Mammary epithelial cell (primary cell): ENCODE measurements at regions of chr2 and their contacts with region 1.

Region 1: DNA sequence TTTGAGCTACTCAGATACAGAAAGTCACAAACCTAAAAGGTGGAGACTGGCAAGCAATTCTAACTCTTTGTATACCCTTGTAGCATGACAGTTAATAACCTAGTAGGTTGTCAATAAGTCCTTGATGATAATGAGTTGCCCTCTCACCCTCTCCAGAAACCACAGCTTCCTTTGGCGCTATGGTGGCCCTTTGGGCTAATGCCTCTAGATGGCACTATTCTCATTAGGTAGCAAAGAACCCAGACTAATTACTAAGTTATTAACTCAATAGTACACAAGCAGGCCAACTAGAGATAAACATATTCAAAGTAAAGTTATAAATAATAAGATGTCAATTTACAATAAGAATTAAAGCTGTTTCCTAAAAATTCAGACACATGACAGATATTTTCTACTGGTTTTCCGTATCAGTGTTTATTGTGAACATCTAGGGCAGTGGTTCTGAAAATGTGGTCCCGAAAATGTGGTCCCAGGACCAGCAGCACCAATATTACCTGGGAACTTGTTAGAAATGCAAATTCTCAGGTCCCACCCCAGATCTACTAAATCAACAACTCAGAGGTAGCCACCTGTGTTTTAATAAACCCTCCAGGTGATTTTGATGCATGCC is 41.1 kb downstream of the LDAH start:
- DNase-seq: peak; percentile 28
- H3K4me3 ChIP-seq: no peak overlapping the region
- H3K27ac ChIP-seq: no peak overlapping the region
- H3K4me1 ChIP-seq: no peaks in the 10 kb centered on the region
- H3K27me3 ChIP-seq: no peaks in the 10 kb centered on the region
- CTCF ChIP-seq: peak; percentile 86 to 88

Region 2: GRCh38 chr2:20916604-20917286 is 135.0 kb after region 1 on chr2:
- CTCF ChIA-PET with region 1: no interaction called
- dilution Hi-C with region 1: no loop called
- in situ Hi-C with region 1: no loop called
- intact Hi-C with region 1: loop called (anchors 2 kb)
- DNase-seq: peak; percentile 13
- H3K4me3 ChIP-seq: no peak overlapping the region
- H3K27ac ChIP-seq: no peak overlapping the region
- H3K4me1 ChIP-seq: peaks cover 29% of the 10 kb centered on the region
- H3K27me3 ChIP-seq: no peaks in the 10 kb centered on the region
- CTCF ChIP-seq: peak; percentile 9 to 37

Region 3: DNA sequence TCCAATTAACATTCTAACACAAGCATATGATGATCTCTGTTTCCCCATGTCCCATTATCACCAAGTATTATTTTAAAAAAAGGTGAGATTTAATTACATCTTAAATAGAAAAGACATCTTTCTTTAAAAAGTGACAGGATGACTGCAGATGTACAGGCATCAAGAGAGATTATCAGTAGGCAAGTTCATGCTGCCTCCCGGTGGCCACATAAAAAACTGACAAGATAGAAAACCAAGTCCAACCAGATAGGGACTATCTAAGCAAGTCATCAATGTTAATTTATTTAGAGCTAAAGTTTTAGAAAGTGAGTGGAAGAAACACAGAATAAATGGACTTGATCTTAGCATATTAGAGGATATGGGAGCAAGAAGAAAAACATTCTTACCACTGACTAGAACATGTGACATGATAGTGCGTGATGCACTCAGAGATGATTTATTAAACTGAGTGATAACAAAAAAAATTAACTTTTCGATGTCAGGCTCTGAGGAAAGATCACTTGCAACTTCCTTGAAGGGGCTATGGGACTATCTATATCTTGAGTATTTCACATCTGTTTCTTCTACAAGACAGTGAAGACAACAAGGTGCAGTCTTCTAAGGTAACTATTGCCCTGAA is 336.6 kb after region 1 on chr2:
- CTCF ChIA-PET with region 1: no interaction called
- dilution Hi-C with region 1: no loop called
- in situ Hi-C with region 1: no loop called
- intact Hi-C with region 1: loop called (anchors 1 kb)
- DNase-seq: peak; percentile 11
- H3K4me3 ChIP-seq: no peak overlapping the region
- H3K27ac ChIP-seq: no peak overlapping the region
- H3K4me1 ChIP-seq: no peaks in the 10 kb centered on the region
- H3K27me3 ChIP-seq: no peaks in the 10 kb centered on the region
- CTCF ChIP-seq: peak; percentile 35 to 62

Region 4: DNA sequence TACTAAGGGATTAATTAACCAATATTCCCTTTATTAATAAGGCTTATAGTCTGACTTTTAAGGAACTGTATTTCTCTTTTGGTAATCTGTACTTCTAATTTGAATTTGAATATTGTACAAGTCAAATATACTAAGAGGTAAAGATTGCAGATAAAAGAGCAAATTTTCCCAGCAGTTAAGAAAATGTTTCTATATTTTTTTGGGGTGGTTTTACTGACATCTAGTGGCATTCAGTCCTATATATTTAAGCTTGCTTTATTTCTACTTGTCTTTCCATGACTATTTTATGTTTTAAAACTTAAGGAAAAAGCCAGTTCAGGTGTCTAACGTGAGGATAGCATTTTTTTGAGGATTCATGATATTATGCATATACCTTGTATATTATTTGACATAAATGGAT is 383.6 kb after region 1 on chr2:
- CTCF ChIA-PET with region 1: no interaction called
- dilution Hi-C with region 1: no loop called
- in situ Hi-C with region 1: no loop called
- intact Hi-C with region 1: loop called (anchors 5 kb)
- DNase-seq: no peak
- H3K4me3 ChIP-seq: no peak overlapping the region
- H3K27ac ChIP-seq: no peak overlapping the region
- H3K4me1 ChIP-seq: no peaks in the 10 kb centered on the region
- H3K27me3 ChIP-seq: no peaks in the 10 kb centered on the region
- CTCF ChIP-seq: peak; percentile 17 to 37